ENCODE measurements at regions of chr9 and their contacts with region 1.

Region 1: GRCh38 chr9:107717529-107718314 is 228.2 kb upstream of the KLF4 start:
- DNase-seq: no peak

Region 2: DNA sequence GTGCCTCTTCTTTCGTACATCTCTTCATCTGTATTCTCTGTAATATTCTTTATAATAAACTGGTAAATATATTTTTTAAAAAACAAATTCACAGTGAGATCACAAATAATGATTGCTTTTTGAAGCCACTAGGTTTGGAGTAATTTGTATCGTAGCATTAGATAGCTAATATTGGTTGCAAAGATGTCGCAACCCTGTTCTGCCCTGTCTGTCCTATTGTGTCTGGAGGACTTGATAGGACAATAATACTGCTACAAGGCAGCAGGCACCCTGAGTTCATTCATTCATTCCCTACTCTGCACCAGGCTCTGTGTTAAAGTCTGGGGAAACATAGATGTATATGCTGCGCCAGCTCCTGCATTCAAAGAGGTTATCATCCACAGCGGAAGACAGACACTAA is 21.4 kb before region 1 on chr9:
- intact Hi-C with region 1: loop called in 1 of 2 experiments (anchors 2 kb)
- DNase-seq: no peak

Measured in posterior vena cava (tissue), 2 donors.